Right ventricle myocardium inferior (tissue), 1 donor: ENCODE measurements at regions of chr2 and their contacts with region 1.

Region 1: DNA sequence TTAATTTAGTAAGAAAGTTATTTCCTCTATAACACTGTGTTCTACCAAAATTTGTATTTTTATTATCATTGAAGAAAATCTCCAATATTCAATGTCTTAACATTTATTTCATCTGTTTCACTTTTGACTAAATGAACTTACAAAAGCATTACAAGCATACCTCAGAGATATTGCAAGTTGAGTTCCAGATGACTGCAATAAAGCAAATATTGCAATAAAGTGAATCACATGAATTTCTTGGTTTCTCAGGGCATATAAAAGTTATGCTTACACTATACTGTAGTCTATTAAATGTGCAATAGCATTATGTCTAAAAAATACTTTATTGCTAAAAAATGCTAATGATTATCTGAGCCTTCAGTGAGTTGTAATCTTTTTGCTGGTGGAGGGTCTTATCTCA is 78.3 kb downstream of the TTC32 start:
- DNase-seq: no peak
- ATAC-seq: no peak

Region 2: DNA sequence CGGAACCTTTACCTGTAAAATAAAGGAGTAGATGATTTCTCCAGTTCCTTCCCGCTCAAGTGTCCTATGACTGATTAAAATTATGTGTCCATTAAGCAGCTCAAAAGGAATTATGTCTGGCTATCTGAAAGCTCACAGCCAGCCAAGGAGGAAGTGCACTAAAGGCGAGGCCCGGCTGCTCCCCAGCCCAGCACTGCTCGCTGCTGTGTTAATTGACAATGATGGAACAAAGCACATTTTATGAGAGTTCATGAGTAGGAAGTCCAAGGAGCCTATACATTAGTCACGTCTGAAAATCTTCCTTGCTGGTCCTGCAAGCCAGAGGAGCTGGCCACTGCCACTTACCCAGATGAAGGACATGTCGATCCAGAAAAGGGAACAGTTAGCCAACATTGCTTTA is 64.0 kb after region 1 on chr2:
- intact Hi-C with region 1: loop called (anchors 2 kb)
- DNase-seq: no peak
- ATAC-seq: no peak